ENCODE measurements at regions of chr3 and their contacts with region 1.

Region 1: GRCh38 chr3:60202052-60202726 is 1049.1 kb downstream of the FHIT start:
- DNase-seq: no peak
- H3K4me3 Mint-ChIP-seq: no peak overlapping the region
- H3K27ac Mint-ChIP-seq: no peak overlapping the region
- H3K4me1 Mint-ChIP-seq: no peaks in the 10 kb centered on the region
- H3K27me3 Mint-ChIP-seq: no peaks in the 10 kb centered on the region

Region 2: DNA sequence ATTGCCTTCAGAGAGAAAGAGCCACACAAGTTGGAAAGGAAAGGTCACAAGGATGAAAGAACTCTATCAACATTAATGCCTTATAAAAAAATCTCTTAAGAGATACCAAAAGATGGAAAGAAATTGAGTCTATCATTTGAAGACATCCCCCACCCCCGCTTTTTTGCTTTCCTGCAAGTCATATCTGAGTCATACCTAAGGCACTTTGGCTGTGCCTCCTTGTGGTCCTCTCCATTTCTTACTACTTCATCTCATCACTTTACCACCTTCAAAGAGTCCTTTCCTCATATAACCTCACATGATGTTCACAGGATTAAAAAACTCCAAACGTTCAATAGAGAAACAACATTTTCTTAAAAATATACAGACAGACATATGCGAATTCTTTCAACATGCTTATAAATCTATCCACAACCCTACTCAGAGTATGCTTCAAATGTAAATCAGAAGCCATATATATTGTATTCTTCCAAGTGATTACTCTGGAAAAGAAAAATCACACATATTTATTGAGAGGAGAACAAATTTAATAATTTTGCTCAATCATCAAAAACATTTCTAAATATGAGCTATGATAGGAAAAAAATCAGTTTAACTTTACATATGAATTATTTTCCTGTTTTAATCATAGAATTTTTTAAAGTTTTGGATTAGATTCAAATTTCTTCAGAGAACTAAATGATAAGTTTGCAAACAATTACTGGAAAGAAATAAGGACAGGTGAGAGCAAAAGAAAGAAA is 148.5 kb before region 1 on chr3:
- CTCF ChIA-PET with region 1: interaction called, 3 read pairs
- POLR2A ChIA-PET with region 1: interaction called, 13 read pairs
- DNase-seq: peak; percentile 19
- H3K4me3 Mint-ChIP-seq: no peak overlapping the region
- H3K27ac Mint-ChIP-seq: peak overlapping the region; percentile 90
- H3K4me1 Mint-ChIP-seq: peaks cover 86% of the 10 kb centered on the region
- H3K27me3 Mint-ChIP-seq: no peaks in the 10 kb centered on the region